Activated T-helper 2 cell treated with anti-CD3 and anti-CD28 coated beads, Interferon-gamma antibody, Interleukin-2, Interleukin-4, amounts not matched to agents 10 μg/mL and 5 μg/mL and 100 μg/mL, durations not matched to agents 14 hours and 24 hours and 36 hours (primary cell): ENCODE measurements at regions of chr4 and their contacts with region 1.

Region 1: DNA sequence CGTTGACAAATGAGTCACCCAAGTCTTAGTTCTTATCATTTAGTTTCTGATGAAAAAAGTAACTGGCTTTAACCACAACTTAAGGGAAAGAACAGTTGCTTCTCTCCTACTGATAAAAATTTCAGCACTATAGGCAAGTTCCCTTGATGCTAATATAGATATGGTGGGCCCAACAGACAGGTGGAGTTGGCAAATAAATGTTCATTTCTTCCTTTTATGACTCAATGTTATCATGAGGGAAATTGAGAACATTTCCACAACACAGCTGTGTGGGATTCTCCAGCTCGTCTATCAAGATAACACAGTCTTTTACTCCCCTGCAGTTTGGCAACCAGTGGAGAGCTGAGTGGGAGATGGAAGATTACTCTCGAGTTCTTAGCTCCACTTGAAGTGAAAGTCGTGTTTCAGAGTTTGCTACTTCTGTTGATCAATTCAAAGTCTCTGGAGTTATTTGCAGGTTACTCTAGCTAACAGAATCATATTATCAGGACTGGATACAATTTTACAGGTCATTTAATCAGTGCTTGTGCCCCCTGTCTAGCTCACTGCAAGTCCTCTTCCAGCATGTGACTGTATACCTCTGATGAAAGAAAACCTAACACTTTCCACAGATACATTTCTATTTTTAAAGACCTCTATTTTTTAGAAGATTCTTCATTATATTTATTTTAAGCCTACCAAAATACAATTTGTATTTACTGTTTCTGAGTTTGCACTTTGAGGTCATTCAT is 270.6 kb upstream of the GK2 start:
- DNase-seq: no peak
- H3K4me3 Mint-ChIP-seq: no peak overlapping the region
- H3K27ac Mint-ChIP-seq: peak overlapping the region; percentile 14
- H3K4me1 Mint-ChIP-seq: peaks cover 29% of the 10 kb centered on the region
- H3K27me3 Mint-ChIP-seq: peaks cover 6% of the 10 kb centered on the region

Region 2: GRCh38 chr4:79831701-79832514 is 153.3 kb after region 1 on chr4:
- intact Hi-C with region 1: loop called (anchors 1 kb)
- DNase-seq: no peak
- H3K4me3 Mint-ChIP-seq: no peak overlapping the region
- H3K27ac Mint-ChIP-seq: no peak overlapping the region
- H3K4me1 Mint-ChIP-seq: peaks cover 4% of the 10 kb centered on the region
- H3K27me3 Mint-ChIP-seq: peaks cover 20% of the 10 kb centered on the region